Right ventricle myocardium inferior (tissue), 1 donor: ENCODE measurements at regions of chr7 and their contacts with region 1.

Region 1: DNA sequence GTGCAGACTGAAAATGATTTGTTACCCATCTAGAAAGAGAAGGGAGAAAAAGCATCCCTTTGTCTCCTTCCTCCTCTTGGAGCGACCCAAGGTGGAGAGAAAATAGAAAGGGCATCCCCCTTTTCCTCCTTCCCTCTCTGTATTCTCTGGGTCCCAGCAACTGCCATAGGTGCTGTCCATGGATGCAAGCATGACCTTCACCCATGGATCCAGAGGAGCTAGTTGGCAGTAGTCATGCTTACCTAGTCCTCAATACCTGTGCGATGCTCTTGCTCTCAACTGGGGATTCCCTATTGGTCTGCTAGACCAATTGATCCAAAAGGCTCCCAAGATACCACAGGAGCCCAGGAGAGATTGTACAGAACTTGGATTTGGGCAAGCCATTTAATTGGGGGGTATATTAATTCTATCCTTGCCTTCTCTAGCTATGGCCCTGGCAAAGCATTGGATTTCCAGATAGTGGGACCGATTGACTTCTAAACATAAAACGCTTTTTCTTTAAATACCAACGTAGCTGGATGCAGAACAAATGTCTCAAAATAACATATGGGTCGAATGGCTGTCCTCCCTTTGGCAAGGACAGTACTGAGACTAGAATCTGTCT is 547.8 kb upstream of the IGFBP3 start:
- DNase-seq: no peak
- ATAC-seq: no peak

Region 2: GRCh38 chr7:46444266-46444665 is 24.6 kb before region 1 on chr7:
- intact Hi-C with region 1: loop called (anchors 2 kb)
- DNase-seq: no peak
- ATAC-seq: no peak